H1 (cell line): ENCODE measurements at regions of chr11 and their contacts with region 1.

Region 1: GRCh38 chr11:88281317-88281712 is 56.2 kb downstream of the CTSC start:
- DNase-seq: no peak
- H3K4me3 ChIP-seq: no peak overlapping the region
- H3K27ac ChIP-seq: no peak overlapping the region
- H3K4me1 ChIP-seq: no peaks in the 10 kb centered on the region; a peak in 1 of 7 replicates
- H3K27me3 ChIP-seq: no peaks in the 10 kb centered on the region
- CTCF ChIP-seq: peak in 2 of 3 experiments; percentile 7 to 23; a peak in 1 of 4 replicates
- EP300 ChIP-seq: no peak
- POLR2A ChIP-seq: no peak
- RAD21 ChIP-seq: peak; percentile 30 to 54; a peak in 3 of 4 replicates

Region 2: GRCh38 chr11:88292171-88292843 is 11.0 kb after region 1 on chr11:
- CTCF ChIA-PET with region 1: interaction called, 7 read pairs
- POLR2A ChIA-PET with region 1: interaction called, 26 read pairs
- DNase-seq: no peak
- H3K4me3 ChIP-seq: no peak overlapping the region
- H3K27ac ChIP-seq: no peak overlapping the region
- H3K4me1 ChIP-seq: no peaks in the 10 kb centered on the region; a peak in 1 of 7 replicates
- H3K27me3 ChIP-seq: no peaks in the 10 kb centered on the region
- CTCF ChIP-seq: no peak
- EP300 ChIP-seq: no peak
- POLR2A ChIP-seq: no peak
- RAD21 ChIP-seq: no peak

Region 3: DNA sequence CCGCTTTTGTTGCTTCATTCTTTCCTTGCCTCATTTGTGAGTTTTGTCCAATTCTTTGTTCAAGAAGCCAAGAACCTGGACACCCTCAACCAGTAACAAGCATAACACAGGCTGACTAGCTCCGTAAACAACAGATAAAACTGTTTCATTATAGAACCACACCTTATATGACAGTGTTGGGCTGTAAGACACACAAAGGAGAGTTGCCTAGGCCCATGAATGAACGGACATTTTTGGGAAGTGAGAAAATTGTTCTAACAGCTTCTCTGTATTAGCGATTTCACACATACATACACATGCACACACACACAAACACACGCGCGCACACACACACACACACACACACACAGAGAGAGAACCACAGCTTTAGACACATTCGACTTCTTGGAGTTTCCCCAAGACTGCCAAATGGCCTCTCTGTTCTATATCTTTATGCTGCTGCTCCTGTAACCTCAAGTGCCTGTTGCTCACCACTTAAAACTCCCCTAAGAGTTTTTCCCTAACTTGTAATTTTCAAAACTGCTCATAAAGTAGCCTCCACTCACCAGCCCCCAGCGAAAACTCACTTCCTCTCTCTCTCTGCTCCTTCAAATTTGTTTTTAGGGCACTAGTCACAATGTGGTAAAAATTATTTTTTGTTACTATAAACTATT is 20.3 kb after region 1 on chr11:
- CTCF ChIA-PET with region 1: interaction called, 5 read pairs
- POLR2A ChIA-PET with region 1: interaction called, 26 read pairs
- DNase-seq: no peak
- H3K4me3 ChIP-seq: peak overlapping the region in 1 of 4 experiments; percentile 19; a peak in 1 of 8 replicates
- H3K27ac ChIP-seq: peak overlapping the region; percentile 75
- H3K4me1 ChIP-seq: peaks cover 2 to 16% (median 12%) of the 10 kb centered on the region in 4 experiments; a peak in 6 of 7 replicates
- H3K27me3 ChIP-seq: no peaks in the 10 kb centered on the region
- CTCF ChIP-seq: no peak
- EP300 ChIP-seq: no peak
- POLR2A ChIP-seq: no peak
- RAD21 ChIP-seq: no peak